ENCODE measurements at regions of chr3 and their contacts with region 1.

Region 1: DNA sequence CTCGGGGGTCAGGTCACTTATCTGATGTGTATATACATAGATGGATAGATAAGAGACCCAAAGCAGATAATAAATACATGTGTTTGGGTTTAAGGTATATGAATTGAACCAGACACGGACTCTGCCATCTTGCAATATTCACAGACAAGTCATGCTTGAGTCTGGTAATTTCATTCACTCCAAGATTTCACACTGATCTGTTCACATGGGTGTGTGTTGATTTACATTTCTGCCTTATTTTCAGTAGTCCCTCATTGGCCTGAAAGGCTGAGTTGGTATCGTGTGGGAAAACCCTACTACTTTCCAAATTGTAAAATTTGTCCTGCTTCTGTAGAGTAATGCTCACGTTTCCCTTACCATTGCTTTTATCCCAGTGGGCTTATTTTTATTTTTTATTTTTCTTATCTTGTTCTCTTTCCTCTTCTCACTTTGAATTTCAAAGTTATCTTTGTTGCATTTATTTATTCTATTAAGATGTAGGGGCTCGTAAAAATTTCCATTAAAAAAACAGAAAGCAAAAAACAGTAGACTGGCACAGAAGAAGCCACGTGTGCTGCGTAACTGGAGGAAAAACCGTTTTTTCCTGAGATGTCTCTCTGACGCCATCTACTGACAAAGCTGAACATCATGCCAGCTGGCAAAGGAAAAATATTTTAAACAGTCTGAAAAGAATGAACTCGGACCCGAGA is 10.8 kb upstream of the MFSD1 start:
- DNase-seq: no peak
- H3K4me3 ChIP-seq: no peak overlapping the region
- CTCF ChIP-seq: peak; percentile 67

Region 2: GRCh38 chr3:158649791-158650190 is 141.3 kb before region 1 on chr3:
- CTCF ChIA-PET with region 1: interaction called, 41 read pairs
- POLR2A ChIA-PET with region 1: no interaction called
- DNase-seq: no peak
- H3K4me3 ChIP-seq: no peak overlapping the region
- CTCF ChIP-seq: no peak

Region 3: GRCh38 chr3:158683216-158683962 is 107.7 kb before region 1 on chr3:
- CTCF ChIA-PET with region 1: interaction called, 16 read pairs
- POLR2A ChIA-PET with region 1: no interaction called
- DNase-seq: peak; percentile 76
- H3K4me3 ChIP-seq: no peak overlapping the region
- CTCF ChIP-seq: no peak

Region 4: GRCh38 chr3:158718490-158719170 is 72.4 kb before region 1 on chr3:
- CTCF ChIA-PET with region 1: interaction called, 358 read pairs
- POLR2A ChIA-PET with region 1: no interaction called
- DNase-seq: peak; percentile 91
- H3K4me3 ChIP-seq: no peak overlapping the region
- CTCF ChIP-seq: no peak

Region 5: DNA sequence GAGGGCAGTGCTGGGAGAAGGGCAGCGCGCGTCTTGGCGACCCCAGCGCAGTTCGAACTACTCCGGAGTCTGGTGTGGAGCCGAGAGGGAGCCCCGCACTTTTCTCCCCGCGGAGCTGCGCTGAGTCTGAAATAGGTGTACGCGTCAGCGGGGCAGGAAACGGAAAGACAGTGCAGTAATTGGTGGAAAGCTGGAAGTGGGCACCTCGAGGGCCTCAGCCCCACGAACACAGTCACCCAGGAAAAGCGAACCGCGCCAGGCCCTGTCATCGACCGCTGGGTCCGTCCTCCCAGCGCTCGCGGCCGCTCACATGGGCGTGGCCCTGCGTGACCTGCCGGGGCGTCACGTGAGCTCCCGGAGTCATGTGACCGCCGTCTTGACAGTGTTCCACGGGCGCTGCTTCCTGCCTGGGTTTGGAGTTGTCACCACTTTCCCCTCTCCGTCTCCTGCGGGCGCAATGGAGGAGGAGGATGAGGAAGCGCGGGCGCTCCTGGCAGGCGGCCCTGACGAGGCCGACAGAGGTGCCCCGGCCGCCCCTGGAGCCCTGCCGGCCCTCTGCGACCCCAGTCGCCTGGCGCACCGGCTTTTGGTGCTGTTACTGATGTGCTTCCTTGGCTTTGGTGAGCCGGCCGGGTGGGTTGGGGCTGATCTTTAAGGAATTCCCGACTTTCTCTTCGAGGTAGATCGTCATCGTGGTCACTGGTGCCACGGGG is 10.8 kb after region 1 on chr3 and contains the start of gene MFSD1:
- CTCF ChIA-PET with region 1: interaction called, 63 read pairs
- POLR2A ChIA-PET with region 1: interaction called, 5 read pairs
- DNase-seq: peak; percentile 44
- H3K4me3 ChIP-seq: peak within 1 kb of the TSS; percentile 83
- CTCF ChIP-seq: no peak